SK-N-SH (cell line): ENCODE measurements at regions of chr4 and their contacts with region 1.

Region 1: GRCh38 chr4:82428969-82429727 is 1.1 kb downstream of the HNRNPDL start:
- DNase-seq: peak; percentile 96
- H3K4me3 ChIP-seq: peak overlapping the region; percentile 96 to 99
- H3K27ac ChIP-seq: peak overlapping the region; percentile 95 to 98
- H3K4me1 ChIP-seq: peaks cover 10 to 25% of the 10 kb centered on the region in 2 experiments; a peak in 3 of 4 replicates
- H3K27me3 ChIP-seq: no peaks in the 10 kb centered on the region
- CTCF ChIP-seq: peak; percentile 78
- EP300 ChIP-seq: no peak; a peak in 1 of 4 replicates
- RAD21 ChIP-seq: 0 out of 2 replicates have a peak, but pooled peaks have one; percentile 22

Region 2: DNA sequence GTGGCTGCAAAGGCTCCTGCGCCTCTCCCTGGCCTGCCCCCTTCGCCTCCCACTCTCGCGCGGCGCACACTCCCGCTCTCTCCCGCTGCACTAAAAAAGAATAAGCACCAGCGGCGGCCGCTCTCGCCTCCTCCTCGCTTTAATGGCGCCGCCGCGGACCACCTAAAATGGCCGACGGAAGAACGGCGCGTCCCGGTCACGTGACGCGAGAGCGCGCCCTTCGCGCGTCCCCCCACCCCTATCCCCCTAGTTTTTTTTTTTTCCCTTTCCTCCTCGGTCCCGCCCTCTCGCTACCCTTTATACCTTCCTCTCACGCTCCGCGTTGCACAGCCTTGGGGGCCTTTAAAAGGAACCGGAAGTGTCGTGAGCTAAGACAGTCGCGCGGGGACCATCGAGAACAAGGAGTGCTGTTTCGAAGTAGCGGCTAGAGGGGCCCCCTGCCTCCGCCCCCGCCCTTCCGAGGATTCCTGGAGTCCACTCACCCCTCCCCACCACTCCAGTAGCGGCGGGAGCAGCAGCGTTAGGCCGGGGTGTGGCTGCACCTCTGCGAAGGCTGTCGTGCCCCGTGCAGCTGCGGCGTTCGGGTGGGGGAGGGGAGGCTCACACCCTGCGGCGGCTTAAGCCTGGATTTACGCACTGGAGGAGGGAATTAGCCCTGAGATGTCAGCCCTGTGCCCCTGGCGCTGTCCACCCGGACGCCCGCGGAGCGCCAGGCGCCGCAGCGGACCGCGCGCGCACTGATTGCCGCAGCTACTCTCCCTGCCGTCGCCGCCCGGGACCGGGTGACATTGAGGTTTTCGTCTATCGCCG is 55.1 kb before region 1 on chr4 and contains the start of gene HNRNPD:
- CTCF ChIA-PET with region 1: interaction called, 15 read pairs
- POLR2A ChIA-PET with region 1: interaction called, 44 read pairs
- DNase-seq: peak; percentile 97
- H3K4me3 ChIP-seq: peak within 1 kb of the TSS; percentile 75 to 89
- H3K27ac ChIP-seq: peak within 1 kb of the TSS; percentile 96
- H3K4me1 ChIP-seq: peaks cover 10 to 13% of the 10 kb centered on the region in 2 experiments; a peak in 3 of 4 replicates
- H3K27me3 ChIP-seq: no peaks in the 10 kb centered on the region
- CTCF ChIP-seq: no peak; the same call in 1 of the 2 replicates
- EP300 ChIP-seq: peak in 1 of 2 experiments; percentile 34; a peak in 2 of 4 replicates
- RAD21 ChIP-seq: no peak
- polyA plus RNA-seq, gene HNRNPD: 128 and 286 TPM in 2 replicates

Region 3: GRCh38 chr4:82450966-82451755 is 22.0 kb after region 1 on chr4:
- CTCF ChIA-PET with region 1: interaction called, 12 read pairs
- POLR2A ChIA-PET with region 1: interaction called, 7 read pairs
- DNase-seq: peak; percentile 67
- H3K4me3 ChIP-seq: no peak overlapping the region
- H3K27ac ChIP-seq: peak overlapping the region in 1 of 2 experiments; percentile 19; a peak in 2 of 4 replicates
- H3K4me1 ChIP-seq: peaks cover 0 to 4% of the 10 kb centered on the region in 2 experiments; a peak in 1 of 4 replicates
- H3K27me3 ChIP-seq: no peaks in the 10 kb centered on the region
- CTCF ChIP-seq: no peak
- EP300 ChIP-seq: no peak
- RAD21 ChIP-seq: no peak

Region 4: DNA sequence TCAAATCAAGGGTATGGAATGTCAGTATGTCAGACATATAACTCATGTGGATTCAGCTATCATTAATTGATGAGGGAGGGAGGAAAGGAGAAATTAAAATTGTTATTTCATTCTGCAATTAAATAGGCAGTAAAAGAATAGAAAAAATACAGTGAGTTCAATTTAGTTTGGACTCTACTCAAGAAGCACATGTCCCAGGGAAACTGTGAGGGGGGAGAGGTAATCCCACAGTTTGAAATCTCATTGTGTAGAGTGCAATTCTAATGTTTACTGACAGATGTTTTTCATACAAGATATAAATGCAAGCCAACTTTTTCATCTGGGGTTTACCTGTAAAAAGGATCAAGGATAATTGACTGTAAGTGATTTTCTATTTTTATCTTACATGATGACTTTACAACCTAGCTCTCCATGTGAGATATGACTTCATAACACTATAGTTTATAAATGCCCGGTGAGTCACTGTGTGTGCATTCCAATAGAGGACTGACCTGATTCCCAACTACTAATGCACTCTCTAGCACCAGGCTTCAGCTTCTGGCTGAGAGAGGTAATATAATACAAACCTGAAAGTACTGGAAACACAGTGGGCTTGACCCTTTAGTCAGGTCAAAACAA is 404.7 kb after region 1 on chr4:
- CTCF ChIA-PET with region 1: no interaction called
- POLR2A ChIA-PET with region 1: no interaction called
- DNase-seq: no peak
- H3K4me3 ChIP-seq: no peak overlapping the region
- H3K27ac ChIP-seq: peak overlapping the region in 1 of 2 experiments; percentile 59; a peak in 2 of 4 replicates
- H3K4me1 ChIP-seq: 0 out of 4 replicates have a peak, but pooled peaks cover 0 to 3% of the 10 kb centered on the region in 2 experiments
- H3K27me3 ChIP-seq: no peaks in the 10 kb centered on the region
- CTCF ChIP-seq: peak; percentile 32; the same call in 1 of the 2 replicates
- EP300 ChIP-seq: no peak
- RAD21 ChIP-seq: no peak